K562 (cell line): ENCODE measurements at regions of chr12 and their contacts with region 1.

Region 1: GRCh38 chr12:110565919-110566871 is 16.9 kb downstream of the PPTC7 start:
- DNase-seq: no peak
- ATAC-seq: peak; percentile 36
- H3K4me3 ChIP-seq: no peak overlapping the region
- H3K27ac ChIP-seq: no peak overlapping the region
- H3K4me1 ChIP-seq: peaks cover 3 to 8% of the 10 kb centered on the region in 2 experiments; a peak in 2 of 5 replicates
- H3K27me3 ChIP-seq: no peaks in the 10 kb centered on the region
- CTCF ChIP-seq: no peak
- EP300 ChIP-seq: no peak
- POLR2A ChIP-seq: no peak
- RAD21 ChIP-seq: no peak

Region 2: DNA sequence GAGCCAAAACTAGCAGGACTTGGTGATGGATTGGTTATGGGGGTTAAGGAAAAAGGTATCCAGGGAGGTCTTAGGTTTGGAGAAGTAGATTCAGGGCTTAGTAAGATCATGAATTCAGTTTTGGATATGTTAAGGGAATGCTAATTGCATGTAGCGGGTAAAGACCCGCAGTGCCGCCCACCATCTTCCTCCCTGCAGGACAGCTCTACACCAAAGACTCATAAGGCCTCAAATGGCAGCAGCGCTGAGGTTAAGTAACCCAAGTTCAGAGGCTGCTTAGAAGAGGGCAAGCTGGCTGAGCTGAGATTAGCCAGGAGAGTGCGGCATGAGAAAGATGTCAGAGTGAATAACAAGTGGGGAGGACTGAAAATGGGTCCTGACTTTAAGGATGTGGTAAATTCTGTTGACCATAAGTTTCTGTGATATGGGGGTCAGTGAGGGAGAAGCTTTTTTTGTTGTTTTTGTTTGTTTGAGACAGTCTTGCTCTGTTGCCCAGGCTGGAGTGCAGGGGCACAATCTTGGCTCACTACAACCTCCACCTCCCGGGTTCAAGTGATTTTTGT is 37.8 kb before region 1 on chr12:
- CTCF ChIA-PET with region 1: no interaction called
- POLR2A ChIA-PET with region 1: no interaction called
- in situ Hi-C with region 1: no loop called
- intact Hi-C with region 1: no loop called
- DNase-seq: no peak
- ATAC-seq: no peak; the same call in 2 of the 3 replicates
- H3K4me3 ChIP-seq: no peak overlapping the region
- H3K27ac ChIP-seq: no peak overlapping the region
- H3K4me1 ChIP-seq: no peaks in the 10 kb centered on the region
- H3K27me3 ChIP-seq: no peaks in the 10 kb centered on the region
- CTCF ChIP-seq: no peak
- EP300 ChIP-seq: no peak
- POLR2A ChIP-seq: no peak
- RAD21 ChIP-seq: no peak

Region 3: GRCh38 chr12:110583137-110584059 is 17.2 kb after region 1 on chr12 and contains the start of gene PPTC7:
- CTCF ChIA-PET with region 1: no interaction called
- POLR2A ChIA-PET with region 1: interaction called, 12 read pairs
- in situ Hi-C with region 1: no loop called
- intact Hi-C with region 1: no loop called
- DNase-seq: peak; percentile 95 to 98 (median 96)
- ATAC-seq: peak; percentile 97
- H3K4me3 ChIP-seq: peak within 1 kb of the TSS; percentile 87
- H3K27ac ChIP-seq: peak within 1 kb of the TSS; percentile 84
- H3K4me1 ChIP-seq: peaks cover 23 to 28% of the 10 kb centered on the region in 2 experiments; a peak in 4 of 5 replicates
- H3K27me3 ChIP-seq: no peaks in the 10 kb centered on the region
- CTCF ChIP-seq: no peak
- EP300 ChIP-seq: no peak; the same call in 1 of the 2 replicates
- POLR2A ChIP-seq: peak; percentile 63
- RAD21 ChIP-seq: no peak
- polyA plus RNA-seq, gene PPTC7: 2.6 to 4.7 TPM